ENCODE measurements at regions of chr11 and their contacts with region 1.

Region 1: GRCh38 chr11:123407130-123407995 is 22.7 kb upstream of the GRAMD1B start:
- DNase-seq: no peak
- H3K4me3 ChIP-seq: no peak overlapping the region
- H3K27ac ChIP-seq: no peak overlapping the region
- H3K4me1 ChIP-seq: peaks cover 11 to 18% (median 15%) of the 10 kb centered on the region in 4 donors
- H3K27me3 ChIP-seq: peaks cover 0 to 12% (median 0%) of the 10 kb centered on the region in 4 donors
- CTCF ChIP-seq: peak; percentile 24 to 53 (median 38)
- EP300 ChIP-seq: no peak
- POLR2A ChIP-seq: no peak

Region 2: DNA sequence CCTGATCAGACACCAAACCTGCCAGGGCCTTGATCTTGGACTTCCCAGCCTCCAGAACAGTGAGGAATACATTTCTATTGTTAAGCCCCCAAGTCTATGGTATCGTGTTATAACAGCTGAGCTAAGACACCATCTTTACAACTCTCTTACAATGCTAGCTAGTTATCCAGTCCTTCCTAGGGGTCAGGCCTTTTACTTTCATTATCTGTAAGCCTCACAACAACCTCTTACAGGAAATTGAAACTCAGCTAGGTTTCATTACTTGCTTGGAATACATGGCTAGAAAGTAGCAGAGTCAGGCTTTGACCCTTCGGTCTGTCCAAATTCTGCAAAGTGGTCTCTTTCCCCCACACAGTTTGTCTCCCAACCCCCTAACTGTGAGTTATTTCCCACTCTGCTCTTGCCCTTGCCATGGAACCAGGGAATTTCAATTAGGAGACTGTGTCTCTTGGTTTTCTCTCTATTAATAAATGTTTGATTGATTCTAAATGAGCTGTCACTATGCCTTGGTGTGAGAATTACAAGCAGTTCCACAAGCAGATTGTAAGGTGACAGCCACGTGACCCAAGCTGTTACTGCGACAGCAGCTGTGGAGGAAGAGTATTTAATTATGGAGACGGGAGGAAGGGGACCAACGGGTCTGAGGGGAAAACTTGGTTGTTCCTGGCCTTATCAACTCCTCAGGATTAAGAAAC is 173.9 kb before region 1 on chr11:
- intact Hi-C with region 1: no loop called
- DNase-seq: no peak
- H3K4me3 ChIP-seq: no peak overlapping the region
- H3K27ac ChIP-seq: peak overlapping the region; percentile 56 to 74 (median 68)
- H3K4me1 ChIP-seq: peaks cover 0 to 56% (median 53%) of the 10 kb centered on the region in 4 donors
- H3K27me3 ChIP-seq: no peaks in the 10 kb centered on the region
- CTCF ChIP-seq: no peak
- EP300 ChIP-seq: no peak
- POLR2A ChIP-seq: no peak

Region 3: GRCh38 chr11:123286761-123287160 is 120.6 kb before region 1 on chr11:
- intact Hi-C with region 1: no loop called
- DNase-seq: no peak
- H3K4me3 ChIP-seq: no peak overlapping the region
- H3K27ac ChIP-seq: no peak overlapping the region
- H3K4me1 ChIP-seq: no peaks in the 10 kb centered on the region
- H3K27me3 ChIP-seq: peaks cover 0 to 10% (median 0%) of the 10 kb centered on the region in 4 donors
- CTCF ChIP-seq: no peak
- EP300 ChIP-seq: no peak
- POLR2A ChIP-seq: no peak

Region 4: DNA sequence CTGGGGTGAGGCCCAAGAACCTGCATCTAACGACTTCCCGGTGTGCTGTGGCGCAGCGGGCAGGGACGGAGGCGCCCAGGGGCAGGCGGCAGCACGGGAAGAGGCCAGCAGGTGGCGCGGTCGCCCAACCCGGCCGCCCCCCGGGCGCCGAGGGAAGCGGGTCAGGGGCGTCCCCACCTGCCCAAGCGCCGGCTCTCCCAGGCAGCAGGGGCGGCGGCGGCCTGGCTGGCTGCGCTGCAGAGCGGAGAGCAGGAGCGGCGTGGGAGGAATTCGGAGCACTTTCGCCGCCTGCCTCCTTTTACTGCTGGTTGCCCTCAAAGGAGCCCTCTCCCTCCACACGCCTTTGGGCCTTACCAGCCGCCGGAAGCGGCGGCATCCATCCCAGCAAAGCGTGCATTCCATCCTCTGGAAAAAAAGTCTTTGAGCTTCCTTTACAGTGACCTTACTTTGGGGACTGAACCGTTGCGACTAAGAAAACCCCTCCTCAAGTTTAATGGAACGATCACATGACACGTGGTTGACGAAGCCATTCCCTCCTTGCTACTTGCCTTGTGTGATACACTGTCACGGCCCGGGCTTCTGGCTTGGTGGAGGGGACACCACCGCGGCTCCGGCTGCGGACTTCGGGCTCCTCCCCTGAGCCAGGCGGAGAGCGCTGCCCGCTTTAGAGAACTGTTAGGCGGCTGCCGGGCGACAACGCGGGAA is 105.5 kb before region 1 on chr11:
- intact Hi-C with region 1: loop called (anchors 5 kb)
- DNase-seq: no peak
- H3K4me3 ChIP-seq: peak overlapping the region; percentile 50 to 62 (median 53)
- H3K27ac ChIP-seq: no peak overlapping the region
- H3K4me1 ChIP-seq: peaks cover 8 to 16% (median 13%) of the 10 kb centered on the region in 4 donors
- H3K27me3 ChIP-seq: peaks cover 0 to 34% (median 0%) of the 10 kb centered on the region in 4 donors
- CTCF ChIP-seq: peak; percentile 77 to 96 (median 93)
- EP300 ChIP-seq: no peak
- POLR2A ChIP-seq: no peak

Region 5: GRCh38 chr11:123478352-123478987 is 71.1 kb after region 1 on chr11:
- intact Hi-C with region 1: loop called (anchors 5 kb)
- DNase-seq: no peak
- H3K4me3 ChIP-seq: peak overlapping the region in 1 of 4 donors; percentile 15
- H3K27ac ChIP-seq: no peak overlapping the region
- H3K4me1 ChIP-seq: peaks cover 0 to 18% (median 4%) of the 10 kb centered on the region in 4 donors
- H3K27me3 ChIP-seq: no peaks in the 10 kb centered on the region
- CTCF ChIP-seq: peak; percentile 65 to 72 (median 71)
- EP300 ChIP-seq: no peak
- POLR2A ChIP-seq: no peak